ENCODE measurements at regions of chr11 and their contacts with region 1.

Region 1: DNA sequence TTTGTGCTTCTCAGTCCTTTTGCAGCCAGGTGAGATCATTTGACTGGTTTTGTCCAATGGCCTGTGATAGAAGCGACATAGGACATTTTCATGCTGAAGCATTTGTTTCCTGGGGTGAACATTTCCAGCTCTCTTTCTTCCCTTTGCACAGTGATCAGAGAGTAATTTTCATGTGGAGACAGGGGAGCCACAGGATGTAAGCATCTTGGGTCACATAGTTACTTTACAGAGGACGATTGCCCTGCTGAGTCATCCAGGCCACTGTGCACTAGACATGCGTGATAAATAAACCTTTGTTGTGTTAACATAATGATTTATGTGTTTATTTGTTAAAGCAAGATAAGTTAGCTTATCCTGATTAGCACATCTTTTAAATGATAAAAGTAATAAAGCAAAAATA is 263.5 kb upstream of the CCDC179 start:
- DNase-seq: peak; percentile 56
- ATAC-seq: peak; percentile 66
- H3K4me3 ChIP-seq: no peak overlapping the region
- H3K27ac ChIP-seq: peak overlapping the region; percentile 56
- H3K4me1 ChIP-seq: peaks cover 32% of the 10 kb centered on the region
- H3K27me3 ChIP-seq: no peaks in the 10 kb centered on the region
- CTCF ChIP-seq: no peak

Region 2: DNA sequence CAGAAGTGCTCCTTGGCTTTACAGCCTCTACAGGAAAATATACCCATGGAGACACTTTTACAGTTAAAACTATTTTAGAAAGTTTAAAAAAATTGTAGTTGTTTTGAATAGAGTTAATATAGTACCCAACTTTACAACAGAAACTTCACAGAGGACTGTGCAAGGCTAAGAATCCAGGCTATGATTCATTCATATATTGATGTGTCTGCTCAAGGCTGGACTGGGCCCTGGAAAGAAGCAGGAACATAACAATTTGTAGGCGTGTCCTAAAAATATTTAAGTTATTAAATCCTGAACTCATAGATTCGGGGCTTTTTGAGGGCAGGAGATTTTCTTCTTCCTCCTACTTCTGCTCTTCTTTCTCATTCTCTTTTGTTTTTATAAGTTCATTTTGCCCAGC is 28.1 kb after region 1 on chr11:
- CTCF ChIA-PET with region 1: no interaction called
- POLR2A ChIA-PET with region 1: no interaction called
- intact Hi-C with region 1: no loop called
- DNase-seq: no peak
- ATAC-seq: peak; percentile 79
- H3K4me3 ChIP-seq: no peak overlapping the region
- H3K27ac ChIP-seq: no peak overlapping the region
- H3K4me1 ChIP-seq: no peaks in the 10 kb centered on the region
- H3K27me3 ChIP-seq: no peaks in the 10 kb centered on the region
- CTCF ChIP-seq: no peak

Region 3: DNA sequence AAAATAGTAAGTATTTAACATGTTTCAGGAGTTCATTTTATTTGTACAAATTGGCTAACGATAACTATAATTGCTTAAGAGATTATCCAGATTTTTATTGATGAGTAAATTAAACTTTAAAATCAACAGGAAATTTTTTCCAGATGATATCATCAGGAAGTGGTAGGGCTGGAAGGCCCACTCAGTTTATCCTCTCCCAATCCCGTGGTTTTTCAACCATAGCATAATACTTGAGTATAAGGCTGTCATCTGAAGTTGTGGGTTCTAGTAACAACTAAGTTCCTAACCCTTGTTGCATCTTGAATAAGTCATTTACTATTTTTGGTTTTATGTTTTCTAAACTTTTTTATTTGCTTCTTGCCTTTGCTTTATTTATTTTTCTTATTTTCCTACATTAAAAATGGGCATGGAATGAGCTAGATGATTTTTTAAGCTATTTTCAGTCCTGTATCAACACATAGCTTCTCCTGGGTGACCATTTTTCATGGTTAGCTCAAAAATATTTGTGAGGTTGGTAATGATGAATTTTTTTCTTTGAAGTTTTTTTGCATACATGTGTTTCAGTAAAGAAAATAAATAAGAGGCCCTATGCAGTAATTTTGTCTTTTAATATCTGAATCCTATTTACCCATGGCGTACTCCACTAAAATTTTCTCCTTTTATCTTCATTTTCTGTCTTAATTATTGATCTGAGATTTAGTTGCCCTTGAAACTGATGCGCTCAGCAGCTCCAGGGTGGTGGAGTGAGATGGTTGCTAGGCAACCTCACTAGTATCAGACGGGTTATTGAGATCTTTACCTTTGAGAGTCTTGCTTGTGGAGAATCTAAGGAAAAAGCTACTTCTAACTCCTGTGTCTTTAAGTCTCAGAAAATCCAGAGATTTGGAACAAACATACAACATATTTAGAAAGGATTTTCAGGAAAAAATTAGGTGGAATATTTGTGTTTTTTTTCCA is 188.5 kb after region 1 on chr11:
- CTCF ChIA-PET with region 1: no interaction called
- POLR2A ChIA-PET with region 1: no interaction called
- intact Hi-C with region 1: loop called (anchors 10 kb)
- DNase-seq: peak; percentile 81
- ATAC-seq: peak; percentile 88
- H3K4me3 ChIP-seq: no peak overlapping the region
- H3K27ac ChIP-seq: peak overlapping the region; percentile 70
- H3K4me1 ChIP-seq: peaks cover 30% of the 10 kb centered on the region
- H3K27me3 ChIP-seq: no peaks in the 10 kb centered on the region
- CTCF ChIP-seq: no peak

Measured in PC-3 (cell line).